ENCODE measurements at regions of chr6 and their contacts with region 1.

Region 1: DNA sequence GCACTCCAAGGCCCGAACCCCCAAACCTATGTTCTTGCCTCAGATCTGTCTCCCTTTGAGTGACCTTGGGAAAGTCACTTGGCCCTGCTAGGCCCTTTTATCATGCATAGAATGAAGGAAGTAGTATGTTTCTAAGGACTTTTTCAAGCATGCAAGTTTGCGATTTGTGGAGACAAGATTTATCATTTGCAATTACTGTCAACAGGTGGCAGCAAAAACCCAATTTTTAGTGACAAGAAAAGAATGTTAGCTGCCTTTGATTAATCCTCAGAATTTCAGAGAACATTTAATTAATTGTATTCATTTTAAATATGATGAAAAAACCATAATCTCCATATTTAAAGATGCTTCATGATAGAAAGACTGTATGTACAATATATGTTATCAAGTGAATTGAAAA is 28.3 kb upstream of the PREP start:
- DNase-seq: peak; percentile 44
- H3K4me3 Mint-ChIP-seq: no peak overlapping the region
- H3K27ac Mint-ChIP-seq: no peak overlapping the region
- H3K4me1 Mint-ChIP-seq: peaks cover 44% of the 10 kb centered on the region
- H3K27me3 Mint-ChIP-seq: no peaks in the 10 kb centered on the region
- CTCF ChIP-seq: no peak

Region 2: GRCh38 chr6:104705095-104705707 is 726.0 kb before region 1 on chr6:
- CTCF ChIA-PET with region 1: no interaction called
- intact Hi-C with region 1: no loop called
- DNase-seq: no peak
- H3K4me3 Mint-ChIP-seq: no peak overlapping the region
- H3K27ac Mint-ChIP-seq: no peak overlapping the region
- H3K4me1 Mint-ChIP-seq: no peaks in the 10 kb centered on the region
- H3K27me3 Mint-ChIP-seq: no peaks in the 10 kb centered on the region
- CTCF ChIP-seq: no peak

Region 3: GRCh38 chr6:105591053-105591452 is 159.8 kb after region 1 on chr6:
- CTCF ChIA-PET with region 1: no interaction called
- intact Hi-C with region 1: loop called (anchors 10 kb)
- DNase-seq: peak; percentile 10
- H3K4me3 Mint-ChIP-seq: no peak overlapping the region
- H3K27ac Mint-ChIP-seq: no peak overlapping the region
- H3K4me1 Mint-ChIP-seq: peaks cover 52% of the 10 kb centered on the region
- H3K27me3 Mint-ChIP-seq: no peaks in the 10 kb centered on the region
- CTCF ChIP-seq: no peak

Region 4: GRCh38 chr6:105733565-105734162 is 302.4 kb after region 1 on chr6:
- CTCF ChIA-PET with region 1: no interaction called
- intact Hi-C with region 1: loop called (anchors 5 kb)
- DNase-seq: no peak
- H3K4me3 Mint-ChIP-seq: no peak overlapping the region
- H3K27ac Mint-ChIP-seq: no peak overlapping the region
- H3K4me1 Mint-ChIP-seq: no peaks in the 10 kb centered on the region
- H3K27me3 Mint-ChIP-seq: no peaks in the 10 kb centered on the region
- CTCF ChIP-seq: peak; percentile 60

Region 5: DNA sequence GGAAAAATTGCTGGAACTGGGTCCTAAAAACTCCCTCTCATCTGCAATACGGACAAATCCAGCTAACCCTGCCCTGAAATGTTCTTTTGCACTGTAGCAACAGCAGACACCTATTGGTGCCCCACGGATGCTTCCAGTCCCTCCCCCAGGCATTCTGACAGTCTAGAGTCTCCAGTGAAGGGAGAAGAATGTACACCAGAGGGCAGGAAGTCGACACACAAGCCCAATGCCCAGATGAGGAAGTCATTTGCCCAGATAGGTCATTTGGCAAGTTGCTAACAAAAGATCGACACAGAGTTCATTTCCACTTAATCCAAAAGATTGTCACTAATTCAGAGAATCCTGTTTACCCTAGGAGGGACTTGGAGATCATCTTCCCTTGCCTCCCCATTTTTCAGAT is 361.9 kb after region 1 on chr6:
- CTCF ChIA-PET with region 1: no interaction called
- intact Hi-C with region 1: loop called (anchors 10 kb)
- DNase-seq: peak; percentile 43
- H3K4me3 Mint-ChIP-seq: no peak overlapping the region
- H3K27ac Mint-ChIP-seq: peak overlapping the region; percentile 44
- H3K4me1 Mint-ChIP-seq: peaks cover 56% of the 10 kb centered on the region
- H3K27me3 Mint-ChIP-seq: no peaks in the 10 kb centered on the region
- CTCF ChIP-seq: no peak

Region 6: GRCh38 chr6:106085984-106086813 is 655.0 kb after region 1 on chr6 and contains the start of gene PRDM1:
- CTCF ChIA-PET with region 1: interaction called, 4 read pairs
- intact Hi-C with region 1: loop called (anchors 10 kb)
- DNase-seq: peak; percentile 89
- H3K4me3 Mint-ChIP-seq: peak within 1 kb of the TSS; percentile 97
- H3K27ac Mint-ChIP-seq: peak within 1 kb of the TSS; percentile 57
- H3K4me1 Mint-ChIP-seq: peaks cover 28% of the 10 kb centered on the region
- H3K27me3 Mint-ChIP-seq: peaks cover 27% of the 10 kb centered on the region
- CTCF ChIP-seq: no peak
- total RNA-seq, gene PRDM1: 0.40 and 1.1 TPM in 2 replicates

Region 7: DNA sequence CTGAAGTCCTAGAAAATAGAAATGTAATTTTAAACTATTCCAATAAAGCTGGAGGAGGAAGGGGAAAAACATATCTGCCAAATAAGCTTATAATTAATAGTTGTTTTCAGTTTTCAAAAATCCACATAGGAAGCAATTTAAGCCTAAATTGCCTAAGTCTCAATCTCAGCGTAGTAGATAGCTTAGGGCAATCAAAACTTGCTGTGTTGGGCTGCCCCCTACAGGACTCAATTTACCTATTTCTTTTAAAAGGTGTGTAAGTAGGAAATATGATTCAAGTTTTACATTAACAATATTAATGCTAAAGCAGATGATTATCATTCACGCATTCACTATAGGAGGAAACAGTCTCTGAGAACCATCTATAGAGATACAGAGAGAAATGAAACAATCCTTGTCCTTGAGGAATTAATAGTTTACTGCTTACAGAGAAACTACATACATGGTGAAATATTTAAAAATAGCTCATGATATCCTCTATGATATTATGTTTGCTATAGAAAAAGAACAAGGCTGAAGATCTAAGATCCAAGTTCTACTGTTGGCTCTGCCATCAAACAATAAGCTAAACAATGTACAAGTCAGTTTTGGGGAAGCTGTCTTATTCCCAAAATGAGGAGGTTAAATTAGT is 792.2 kb after region 1 on chr6:
- CTCF ChIA-PET with region 1: interaction called, 10 read pairs
- intact Hi-C with region 1: loop called (anchors 10 kb)
- DNase-seq: peak; percentile 70
- H3K4me3 Mint-ChIP-seq: no peak overlapping the region
- H3K27ac Mint-ChIP-seq: no peak overlapping the region
- H3K4me1 Mint-ChIP-seq: peaks cover 13% of the 10 kb centered on the region
- H3K27me3 Mint-ChIP-seq: no peaks in the 10 kb centered on the region
- CTCF ChIP-seq: peak; percentile 61

Region 8: GRCh38 chr6:106300944-106301343 is 869.7 kb after region 1 on chr6:
- CTCF ChIA-PET with region 1: no interaction called
- intact Hi-C with region 1: loop called (anchors 2 kb)
- DNase-seq: no peak
- H3K4me3 Mint-ChIP-seq: no peak overlapping the region
- H3K27ac Mint-ChIP-seq: no peak overlapping the region
- H3K4me1 Mint-ChIP-seq: peaks cover 7% of the 10 kb centered on the region
- H3K27me3 Mint-ChIP-seq: no peaks in the 10 kb centered on the region
- CTCF ChIP-seq: no peak